ENCODE measurements at regions of chr2 and their contacts with region 1.

Region 1: DNA sequence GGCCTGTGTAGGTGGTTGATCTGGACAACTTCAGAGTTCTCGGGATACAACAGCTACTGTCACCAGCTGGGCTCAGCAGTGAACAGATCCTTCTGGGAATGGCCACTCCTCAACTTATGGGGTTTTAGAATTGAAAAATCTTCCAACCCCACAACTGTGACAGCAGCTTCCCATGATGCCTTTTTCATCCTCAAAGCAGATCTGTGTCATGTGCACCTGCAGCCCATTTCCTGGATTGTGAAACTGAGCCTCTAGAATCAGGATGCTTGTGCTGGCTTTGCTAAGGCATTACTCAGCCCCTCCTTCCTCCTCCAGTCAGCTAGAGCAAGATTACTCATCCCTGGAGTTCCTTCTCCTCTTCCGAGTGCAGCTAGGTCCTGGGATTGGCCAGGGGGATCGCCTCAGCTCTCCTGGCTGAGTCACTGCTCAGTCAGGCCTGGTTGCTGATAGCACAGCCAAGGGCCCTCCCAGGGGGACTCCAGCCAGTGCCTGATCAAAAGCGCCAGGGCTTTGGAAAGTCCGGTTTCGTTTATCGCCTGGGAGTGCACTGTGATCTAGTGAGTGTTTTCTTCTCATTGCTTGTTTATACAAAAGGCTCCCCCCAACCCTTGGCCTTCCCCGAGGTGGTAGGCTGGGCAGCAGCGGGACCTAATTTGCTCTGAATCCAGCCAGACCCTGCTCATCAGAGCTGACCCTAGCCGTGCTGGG is 2.4 kb upstream of the LPIN1 start:
- DNase-seq: peak; percentile 96 to 98
- H3K4me3 ChIP-seq: peak overlapping the region; percentile 7 to 37
- H3K27ac ChIP-seq: peak overlapping the region; percentile 56 to 70
- H3K4me1 ChIP-seq: peaks cover 0 to 46% (median 31%) of the 10 kb centered on the region in 4 donors
- H3K27me3 ChIP-seq: no peaks in the 10 kb centered on the region
- CTCF ChIP-seq: no peak

Region 2: GRCh38 chr2:9857814-9858729 is 1885.9 kb before region 1 on chr2:
- intact Hi-C with region 1: no loop called
- DNase-seq: no peak
- H3K4me3 ChIP-seq: no peak overlapping the region
- H3K27ac ChIP-seq: no peak overlapping the region
- H3K4me1 ChIP-seq: no peaks in the 10 kb centered on the region
- H3K27me3 ChIP-seq: no peaks in the 10 kb centered on the region
- CTCF ChIP-seq: no peak

Region 3: GRCh38 chr2:11465497-11466406 is 278.2 kb before region 1 on chr2 and contains the start of gene E2F6:
- intact Hi-C with region 1: loop called (anchors 10 kb)
- DNase-seq: peak; percentile 91 to 96
- H3K4me3 ChIP-seq: peak within 1 kb of the TSS; percentile 73 to 88
- H3K27ac ChIP-seq: peak within 1 kb of the TSS; percentile 80 to 90
- H3K4me1 ChIP-seq: peaks cover 0 to 45% (median 23%) of the 10 kb centered on the region in 4 donors
- H3K27me3 ChIP-seq: no peaks in the 10 kb centered on the region
- CTCF ChIP-seq: peak in 1 of 2 experiments; percentile 19

Region 4: GRCh38 chr2:11726384-11726783 is 17.6 kb before region 1 on chr2:
- intact Hi-C with region 1: no loop called
- DNase-seq: no peak
- H3K4me3 ChIP-seq: no peak overlapping the region
- H3K27ac ChIP-seq: no peak overlapping the region
- H3K4me1 ChIP-seq: no peaks in the 10 kb centered on the region
- H3K27me3 ChIP-seq: peaks cover 0 to 2% of the 10 kb centered on the region in 2 donors
- CTCF ChIP-seq: no peak

Measured in tibial artery (tissue), 4 donors.